Prostate gland (tissue), 2 donors: ENCODE measurements at regions of chr10 and their contacts with region 1.

Region 1: GRCh38 chr10:63629363-63630084 is 108.3 kb downstream of the REEP3 start:
- DNase-seq: peak; percentile 96
- H3K4me3 ChIP-seq: peak overlapping the region; percentile 53 to 57
- H3K27ac ChIP-seq: peak overlapping the region; percentile 96 to 98
- H3K4me1 ChIP-seq: peaks cover 7% of the 10 kb centered on the region
- H3K27me3 ChIP-seq: no peaks in the 10 kb centered on the region
- CTCF ChIP-seq: peak; percentile 47 to 74 (median 66)
- POLR2A ChIP-seq: peak; percentile 9

Region 2: DNA sequence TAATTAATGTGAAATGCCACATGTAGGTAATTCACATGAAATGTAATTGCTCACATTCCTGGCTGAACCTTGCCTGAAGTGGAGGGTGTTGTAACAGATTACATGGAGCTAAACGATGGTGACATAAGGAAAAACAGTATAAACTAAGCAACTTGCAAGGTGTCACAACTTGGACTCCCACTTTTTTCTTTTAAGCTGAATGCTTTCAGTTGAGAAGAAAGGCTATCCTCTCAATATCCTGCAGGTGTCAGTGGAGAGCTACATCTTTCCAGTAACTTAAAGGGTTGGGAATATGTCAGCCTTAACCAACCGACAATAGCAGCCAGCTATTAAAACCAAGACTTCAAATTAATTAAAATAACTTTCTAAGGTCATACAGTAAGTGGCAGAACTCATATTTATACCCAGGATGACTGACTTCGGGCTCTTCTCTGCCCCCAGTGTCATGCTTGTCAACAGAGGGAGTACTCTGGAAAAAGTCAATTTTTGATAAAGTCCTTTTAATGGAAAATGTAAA is 462.7 kb before region 1 on chr10:
- intact Hi-C with region 1: loop called (anchors 5 kb)
- DNase-seq: peak; percentile 10
- H3K4me3 ChIP-seq: no peak overlapping the region
- H3K27ac ChIP-seq: no peak overlapping the region
- H3K4me1 ChIP-seq: peaks cover 6% of the 10 kb centered on the region
- H3K27me3 ChIP-seq: no peaks in the 10 kb centered on the region
- CTCF ChIP-seq: peak; percentile 57 to 85 (median 76)
- POLR2A ChIP-seq: no peak

Region 3: GRCh38 chr10:63465293-63466143 is 164.0 kb before region 1 on chr10 and contains the start of gene JMJD1C:
- intact Hi-C with region 1: loop called (anchors 5 kb)
- DNase-seq: peak; percentile 75
- H3K4me3 ChIP-seq: peak within 1 kb of the TSS; percentile 80 to 85
- H3K27ac ChIP-seq: peak within 1 kb of the TSS; percentile 96 to 97
- H3K4me1 ChIP-seq: peaks cover 3% of the 10 kb centered on the region
- H3K27me3 ChIP-seq: no peaks in the 10 kb centered on the region
- CTCF ChIP-seq: peak in 2 of 4 experiments; percentile 8 to 22
- POLR2A ChIP-seq: peak; percentile 79
- total RNA-seq, gene JMJD1C: 66.9 to 97.9 TPM

Region 4: GRCh38 chr10:63573068-63573697 is 56.3 kb before region 1 on chr10:
- intact Hi-C with region 1: loop called (anchors 10 kb)
- DNase-seq: no peak
- H3K4me3 ChIP-seq: no peak overlapping the region
- H3K27ac ChIP-seq: peak overlapping the region; percentile 18 to 64
- H3K4me1 ChIP-seq: no peaks in the 10 kb centered on the region
- H3K27me3 ChIP-seq: no peaks in the 10 kb centered on the region
- CTCF ChIP-seq: no peak
- POLR2A ChIP-seq: no peak

Region 5: DNA sequence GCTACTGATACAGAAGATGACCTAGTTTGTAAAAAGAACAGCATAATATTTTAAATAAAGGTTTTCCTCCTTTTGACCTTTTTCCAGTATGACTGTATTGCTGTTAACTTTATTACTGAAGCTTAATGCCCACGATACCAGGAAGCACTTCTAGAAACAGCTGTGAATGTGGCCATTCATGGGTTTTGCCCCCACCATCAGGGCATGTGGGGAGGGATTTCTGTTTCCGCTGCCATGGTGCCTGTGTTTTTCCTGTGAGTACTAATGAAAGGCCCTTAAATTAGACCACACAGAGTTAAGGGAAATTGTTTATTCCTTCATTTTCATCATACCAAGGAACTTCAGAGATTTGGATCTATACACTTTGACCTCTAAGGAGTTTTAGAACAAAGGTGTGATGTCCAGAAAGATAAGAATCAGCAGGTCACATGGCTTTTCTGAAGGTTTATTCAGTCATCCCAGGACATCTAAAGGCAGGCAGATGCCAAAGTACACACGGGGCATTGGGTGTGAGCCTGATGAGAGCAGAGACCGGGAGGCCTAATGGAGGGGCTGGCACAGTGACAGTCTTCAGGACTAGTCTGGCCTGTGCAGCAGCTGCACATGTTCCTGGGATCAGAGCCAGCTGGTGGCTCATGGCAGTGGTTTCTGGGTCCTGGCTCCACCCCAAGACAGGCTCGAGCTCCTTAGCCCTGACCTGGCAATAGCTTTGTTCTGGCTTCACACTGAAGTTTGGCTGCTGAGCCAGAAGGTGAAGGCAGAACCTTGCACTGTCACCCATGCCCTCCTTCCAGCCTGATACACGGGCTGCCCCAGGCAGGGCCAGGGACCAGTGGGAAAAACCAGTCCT is 82.6 kb after region 1 on chr10:
- intact Hi-C with region 1: loop called (anchors 2 kb)
- DNase-seq: peak; percentile 99
- H3K4me3 ChIP-seq: no peak overlapping the region
- H3K27ac ChIP-seq: peak overlapping the region; percentile 71 to 81
- H3K4me1 ChIP-seq: peaks cover 18% of the 10 kb centered on the region
- H3K27me3 ChIP-seq: no peaks in the 10 kb centered on the region
- CTCF ChIP-seq: no peak
- POLR2A ChIP-seq: no peak